Activated naive CD4-positive, alpha-beta T cell treated with anti-CD3 and anti-CD28 coated beads for 36 hours (primary cell): ENCODE measurements at regions of chr2 and their contacts with region 1.

Region 1: GRCh38 chr2:25376750-25377621 is 35.3 kb upstream of the DNMT3A start:
- DNase-seq: peak; percentile 96
- H3K4me3 Mint-ChIP-seq: peak overlapping the region; percentile 64
- H3K27ac Mint-ChIP-seq: peak overlapping the region; percentile 96
- H3K4me1 Mint-ChIP-seq: peaks cover 28% of the 10 kb centered on the region
- H3K27me3 Mint-ChIP-seq: no peaks in the 10 kb centered on the region

Region 2: GRCh38 chr2:24509425-24509824 is 867.6 kb before region 1 on chr2:
- CTCF ChIA-PET with region 1: no interaction called
- intact Hi-C with region 1: no loop called
- DNase-seq: no peak
- H3K4me3 Mint-ChIP-seq: no peak overlapping the region
- H3K27ac Mint-ChIP-seq: no peak overlapping the region
- H3K4me1 Mint-ChIP-seq: peaks cover 68% of the 10 kb centered on the region
- H3K27me3 Mint-ChIP-seq: no peaks in the 10 kb centered on the region

Region 3: GRCh38 chr2:25276569-25277465 is 100.2 kb before region 1 on chr2:
- CTCF ChIA-PET with region 1: interaction called, 4 read pairs
- intact Hi-C with region 1: loop called (anchors 2 kb)
- DNase-seq: peak; percentile 88
- H3K4me3 Mint-ChIP-seq: peak overlapping the region; percentile 55
- H3K27ac Mint-ChIP-seq: peak overlapping the region; percentile 94
- H3K4me1 Mint-ChIP-seq: peaks cover 83% of the 10 kb centered on the region
- H3K27me3 Mint-ChIP-seq: no peaks in the 10 kb centered on the region

Region 4: GRCh38 chr2:25314514-25315315 is 62.3 kb before region 1 on chr2:
- CTCF ChIA-PET with region 1: interaction called, 40 read pairs
- intact Hi-C with region 1: loop called (anchors 1 kb)
- DNase-seq: peak; percentile 98
- H3K4me3 Mint-ChIP-seq: peak overlapping the region; percentile 92
- H3K27ac Mint-ChIP-seq: peak overlapping the region; percentile 97
- H3K4me1 Mint-ChIP-seq: peaks cover 64% of the 10 kb centered on the region
- H3K27me3 Mint-ChIP-seq: no peaks in the 10 kb centered on the region

Region 5: DNA sequence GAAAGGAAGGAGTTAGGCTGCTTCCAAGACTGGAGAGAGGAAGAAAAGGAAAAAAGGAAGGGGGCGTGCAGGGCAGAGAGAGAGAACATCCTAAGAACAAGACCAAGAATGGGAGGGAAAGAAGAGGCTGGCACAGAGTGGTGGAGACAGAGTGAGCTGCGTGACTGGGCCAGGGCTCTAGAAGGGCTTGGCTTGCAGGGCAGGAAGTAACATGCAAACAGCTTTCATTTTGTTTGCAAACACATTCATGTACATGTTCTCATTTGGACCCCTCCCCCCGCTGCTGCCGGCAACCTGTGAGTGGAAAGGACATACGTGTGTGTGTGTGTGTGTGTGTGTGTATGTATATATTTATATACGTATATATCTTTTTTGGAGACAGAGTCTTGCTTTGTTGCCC is 11.5 kb after region 1 on chr2:
- CTCF ChIA-PET with region 1: interaction called, 12 read pairs
- intact Hi-C with region 1: no loop called
- DNase-seq: no peak
- H3K4me3 Mint-ChIP-seq: no peak overlapping the region
- H3K27ac Mint-ChIP-seq: no peak overlapping the region
- H3K4me1 Mint-ChIP-seq: peaks cover 15% of the 10 kb centered on the region
- H3K27me3 Mint-ChIP-seq: no peaks in the 10 kb centered on the region

Region 6: GRCh38 chr2:25558262-25558661 is 181.3 kb after region 1 on chr2:
- CTCF ChIA-PET with region 1: interaction called, 3 read pairs
- intact Hi-C with region 1: loop called (anchors 1 kb)
- DNase-seq: peak; percentile 58
- H3K4me3 Mint-ChIP-seq: no peak overlapping the region
- H3K27ac Mint-ChIP-seq: peak overlapping the region; percentile 35
- H3K4me1 Mint-ChIP-seq: peaks cover 52% of the 10 kb centered on the region
- H3K27me3 Mint-ChIP-seq: no peaks in the 10 kb centered on the region